Posterior cingulate gyrus (tissue), 11 donors: ENCODE measurements at regions of chrX and their contacts with region 1.

Region 1: GRCh38 chrX:47497273-47497672 is 14.3 kb upstream of the ZNF41 start:
- DNase-seq: no peak

Region 2: DNA sequence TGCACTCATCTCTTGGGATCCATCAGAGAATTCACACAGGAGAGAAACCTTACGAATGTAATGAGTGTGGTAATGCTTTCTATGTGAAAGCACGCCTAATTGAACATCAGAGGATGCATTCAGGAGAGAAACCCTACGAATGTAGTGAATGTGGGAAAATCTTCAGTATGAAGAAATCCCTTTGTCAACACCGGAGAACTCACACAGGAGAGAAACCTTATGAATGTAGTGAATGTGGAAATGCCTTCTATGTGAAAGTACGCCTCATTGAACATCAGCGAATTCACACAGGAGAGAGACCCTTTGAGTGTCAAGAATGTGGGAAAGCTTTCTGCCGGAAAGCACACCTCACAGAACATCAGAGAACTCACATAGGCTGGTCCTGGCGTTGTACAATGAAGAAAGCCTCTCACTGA is 84.1 kb before region 1 on chrX:
- intact Hi-C with region 1: no loop called
- DNase-seq: no peak

Region 3: GRCh38 chrX:47523297-47523696 is 26.0 kb after region 1 on chrX:
- intact Hi-C with region 1: loop called (anchors 1 kb)
- DNase-seq: peak; percentile 70 to 97 (median 84)

Region 4: DNA sequence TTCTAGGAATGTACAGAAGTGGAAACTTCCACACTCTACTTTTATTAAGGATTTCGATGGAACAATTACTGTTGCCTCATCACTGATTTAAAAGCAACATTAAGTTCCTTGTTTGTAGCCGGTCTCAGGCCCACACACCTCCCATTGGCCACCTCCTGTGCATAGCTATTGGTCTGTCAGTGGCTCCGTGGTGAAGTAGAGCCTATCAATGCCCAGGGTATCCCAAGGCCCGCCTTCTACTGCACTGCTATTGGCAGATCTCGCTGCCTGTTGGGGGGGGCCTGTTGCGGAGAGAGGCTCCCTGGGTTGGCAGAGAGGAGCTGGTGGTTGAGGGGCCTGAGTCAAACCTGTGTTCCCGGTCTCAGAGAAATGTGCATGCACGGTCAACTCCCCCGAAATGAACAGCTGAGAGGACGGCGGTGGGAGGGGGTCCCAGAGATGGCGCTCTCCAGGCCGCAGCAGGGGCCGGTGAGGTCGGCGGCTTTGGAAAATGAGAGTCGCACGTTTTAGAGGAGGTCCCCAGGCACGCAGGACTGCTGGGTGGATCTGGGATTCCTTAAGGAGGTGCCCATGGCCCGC is 58.9 kb after region 1 on chrX:
- intact Hi-C with region 1: no loop called
- DNase-seq: peak; percentile 80 to 99 (median 88)